CD4-positive, alpha-beta T cell (primary cell): ENCODE measurements at regions of chr22 and their contacts with region 1.

Region 1: DNA sequence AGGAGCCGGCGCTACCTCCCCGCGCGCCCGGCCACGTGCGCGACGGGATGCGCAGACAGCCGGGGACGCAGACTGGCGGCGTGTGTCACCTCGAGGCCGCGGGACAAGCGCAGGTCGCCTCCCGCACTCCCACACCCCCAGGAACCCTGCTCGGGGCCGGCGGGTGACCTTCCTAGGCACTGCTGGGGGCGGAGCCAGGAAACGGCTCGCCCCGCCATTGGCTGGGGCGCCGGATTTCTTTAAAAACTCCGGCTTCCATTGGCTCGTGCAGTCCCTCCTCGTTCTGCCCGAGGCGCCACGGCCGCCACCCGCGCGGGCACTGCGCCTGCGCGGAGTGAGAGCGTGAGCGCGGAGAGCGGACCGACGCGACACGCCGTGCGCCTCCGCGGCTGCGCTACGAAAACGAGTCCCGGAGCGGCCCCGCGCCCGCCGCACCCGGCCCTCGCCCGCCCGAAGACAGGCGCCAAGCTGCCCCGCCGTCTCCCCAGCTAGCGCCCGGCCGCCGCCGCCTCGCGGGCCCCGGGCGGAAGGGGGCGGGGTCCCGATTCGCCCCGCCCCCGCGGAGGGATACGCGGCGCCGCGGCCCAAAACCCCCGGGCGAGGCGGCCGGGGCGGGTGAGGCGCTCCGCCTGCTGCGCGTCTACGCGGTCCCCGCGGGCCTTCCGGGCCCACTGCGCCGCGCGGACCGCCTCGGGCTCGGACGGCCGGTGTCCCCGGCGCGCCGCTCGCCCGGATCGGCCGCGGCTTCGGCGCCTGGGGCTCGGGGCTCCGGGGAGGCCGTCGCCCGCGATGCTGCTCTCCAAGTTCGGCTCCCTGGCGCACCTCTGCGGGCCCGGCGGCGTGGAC is at the start of gene PIM3:
- DNase-seq: peak; percentile 82 to 97 (median 88)
- ATAC-seq: peak; percentile 61
- H3K4me3 ChIP-seq: peak within 1 kb of the TSS; percentile 82
- H3K4me3 Mint-ChIP-seq: peak within 1 kb of the TSS; percentile 96
- H3K27ac ChIP-seq: peak within 1 kb of the TSS; percentile 82 to 91
- H3K27ac Mint-ChIP-seq: peak within 1 kb of the TSS; percentile 97
- H3K4me1 ChIP-seq: peaks cover 41% of the 10 kb centered on the region
- H3K4me1 Mint-ChIP-seq: peaks cover 18% of the 10 kb centered on the region
- H3K27me3 ChIP-seq: no peaks in the 10 kb centered on the region
- H3K27me3 Mint-ChIP-seq: no peaks in the 10 kb centered on the region
- CTCF ChIP-seq: no peak
- total RNA-seq, gene PIM3: 224 to 230 TPM

Region 2: GRCh38 chr22:49903322-49904039 is 56.9 kb before region 1 on chr22:
- CTCF ChIA-PET with region 1: no interaction called
- POLR2A ChIA-PET with region 1: no interaction called
- intact Hi-C with region 1: no loop called
- DNase-seq: peak in 1 of 14 experiments; percentile 15
- ATAC-seq: no peak
- H3K4me3 ChIP-seq: no peak overlapping the region
- H3K4me3 Mint-ChIP-seq: no peak overlapping the region
- H3K27ac ChIP-seq: no peak overlapping the region
- H3K27ac Mint-ChIP-seq: no peak overlapping the region
- H3K4me1 ChIP-seq: peaks cover 2% of the 10 kb centered on the region
- H3K4me1 Mint-ChIP-seq: no peaks in the 10 kb centered on the region
- H3K27me3 ChIP-seq: no peaks in the 10 kb centered on the region
- H3K27me3 Mint-ChIP-seq: no peaks in the 10 kb centered on the region
- CTCF ChIP-seq: no peak

Region 3: DNA sequence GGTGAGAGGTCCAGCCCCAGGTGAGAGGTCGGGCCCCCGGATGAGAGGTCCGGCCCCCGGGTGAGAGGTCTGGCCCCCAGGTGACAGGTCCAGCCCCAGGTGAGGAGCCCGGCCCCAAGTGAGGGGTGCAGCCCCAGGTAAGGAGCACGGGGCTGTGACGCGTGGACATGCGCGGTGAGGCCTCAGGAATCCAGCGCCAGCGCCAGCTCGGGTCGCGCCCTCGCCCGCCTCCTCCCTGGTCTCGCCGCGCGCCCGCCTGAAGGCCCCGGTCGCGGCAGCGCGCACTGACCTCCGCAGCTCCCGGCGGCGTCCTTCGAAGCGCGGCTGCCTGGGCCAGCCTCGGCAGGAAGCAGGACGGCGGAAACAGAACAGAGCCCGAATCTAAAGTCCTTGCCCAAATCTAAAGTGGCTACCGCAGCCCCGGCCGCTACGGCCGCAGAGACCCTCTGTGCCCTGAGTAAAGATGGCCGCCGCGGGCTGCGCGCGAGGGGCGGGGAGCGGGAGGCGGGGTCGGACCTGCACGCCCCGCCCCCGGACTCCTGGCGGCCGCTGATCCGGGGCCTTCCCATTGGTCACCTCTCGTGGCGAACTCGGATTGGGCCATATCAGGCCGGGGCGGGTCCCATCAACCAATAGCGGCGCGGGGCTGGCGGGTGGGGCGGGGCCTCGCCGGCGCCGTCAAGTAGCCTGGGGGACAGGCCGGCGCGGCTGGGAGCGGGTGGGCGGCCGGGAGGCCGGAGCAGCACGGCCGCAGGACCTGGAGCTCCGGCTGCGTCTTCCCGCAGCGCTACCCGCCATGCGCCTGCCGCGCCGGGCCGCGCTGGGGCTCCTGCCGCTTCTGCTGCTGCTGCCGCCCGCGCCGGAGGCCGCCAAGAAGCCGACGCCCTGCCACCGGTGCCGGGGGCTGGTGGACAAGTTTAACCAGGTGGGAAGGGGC is 42.1 kb before region 1 on chr22 and contains the starts of genes ALG12 and CRELD2:
- CTCF ChIA-PET with region 1: no interaction called
- POLR2A ChIA-PET with region 1: interaction called, 3 read pairs
- intact Hi-C with region 1: loop called in 1 of 2 experiments (anchors 1 kb)
- DNase-seq: peak; percentile 93 to 98 (median 96)
- ATAC-seq: peak; percentile 99
- H3K4me3 ChIP-seq: peak within 1 kb of the TSS; percentile 89
- H3K4me3 Mint-ChIP-seq: peak within 1 kb of the TSS; percentile 95
- H3K27ac ChIP-seq: peak within 1 kb of the TSS; percentile 58 to 83
- H3K27ac Mint-ChIP-seq: peak within 1 kb of the TSS; percentile 85
- H3K4me1 ChIP-seq: peaks cover 24% of the 10 kb centered on the region
- H3K4me1 Mint-ChIP-seq: peaks cover 21% of the 10 kb centered on the region
- H3K27me3 ChIP-seq: no peaks in the 10 kb centered on the region
- H3K27me3 Mint-ChIP-seq: no peaks in the 10 kb centered on the region
- CTCF ChIP-seq: no peak
- total RNA-seq, gene ALG12: 13.5 to 14.6 TPM
- total RNA-seq, gene CRELD2: 21.2 to 23.3 TPM

Region 4: GRCh38 chr22:49936018-49936952 is 24.1 kb before region 1 on chr22:
- CTCF ChIA-PET with region 1: interaction called, 11 read pairs
- POLR2A ChIA-PET with region 1: interaction called, 92 read pairs
- intact Hi-C with region 1: loop called (anchors 1 kb)
- DNase-seq: peak; percentile 85 to 97 (median 92)
- ATAC-seq: peak; percentile 74
- H3K4me3 ChIP-seq: peak overlapping the region; percentile 47
- H3K4me3 Mint-ChIP-seq: peak overlapping the region; percentile 76
- H3K27ac ChIP-seq: peak overlapping the region; percentile 86 to 88
- H3K27ac Mint-ChIP-seq: peak overlapping the region; percentile 87
- H3K4me1 ChIP-seq: peaks cover 58% of the 10 kb centered on the region
- H3K4me1 Mint-ChIP-seq: peaks cover 13% of the 10 kb centered on the region
- H3K27me3 ChIP-seq: no peaks in the 10 kb centered on the region
- H3K27me3 Mint-ChIP-seq: no peaks in the 10 kb centered on the region
- CTCF ChIP-seq: no peak

Region 5: DNA sequence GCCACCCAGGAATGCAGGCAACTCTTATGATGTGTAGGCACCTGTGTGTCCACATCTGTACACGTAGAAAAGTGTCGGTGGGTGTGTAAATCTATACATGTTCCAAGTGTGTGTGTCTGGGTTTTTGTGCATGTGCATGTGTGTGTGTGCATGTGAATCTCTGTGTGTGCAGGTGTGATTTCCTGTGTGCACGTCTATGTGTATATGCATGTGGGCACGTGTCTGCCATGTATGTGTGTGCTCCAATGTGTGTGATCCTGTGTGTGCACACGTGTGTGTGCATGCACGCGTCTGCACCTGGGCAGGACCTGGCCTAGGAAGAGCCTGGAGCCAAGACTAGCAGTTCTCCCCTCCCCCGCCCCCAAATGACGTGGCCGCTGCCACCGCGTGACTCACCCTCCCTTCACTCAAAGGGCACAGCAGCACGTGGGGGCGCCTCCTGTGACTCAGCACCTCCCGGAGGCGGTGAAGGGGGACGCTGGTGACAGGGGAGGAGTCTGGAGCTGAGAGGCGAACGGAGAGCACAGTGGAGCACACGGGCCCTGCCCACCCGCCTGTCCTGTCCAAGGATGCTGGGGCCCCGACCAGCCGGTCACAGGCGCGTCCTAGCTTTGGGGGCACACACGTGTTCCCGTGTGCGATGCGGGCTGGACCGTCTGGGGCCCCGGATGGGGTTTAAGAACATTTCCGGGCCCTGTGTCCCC is 10.3 kb after region 1 on chr22:
- CTCF ChIA-PET with region 1: no interaction called
- POLR2A ChIA-PET with region 1: interaction called, 19 read pairs
- intact Hi-C with region 1: no loop called
- DNase-seq: peak; percentile 81 to 98 (median 93)
- ATAC-seq: peak; percentile 86
- H3K4me3 ChIP-seq: peak overlapping the region; percentile 56
- H3K4me3 Mint-ChIP-seq: peak overlapping the region; percentile 87
- H3K27ac ChIP-seq: no peak overlapping the region
- H3K27ac Mint-ChIP-seq: peak overlapping the region; percentile 83
- H3K4me1 ChIP-seq: peaks cover 66% of the 10 kb centered on the region
- H3K4me1 Mint-ChIP-seq: peaks cover 25% of the 10 kb centered on the region
- H3K27me3 ChIP-seq: no peaks in the 10 kb centered on the region
- H3K27me3 Mint-ChIP-seq: no peaks in the 10 kb centered on the region
- CTCF ChIP-seq: no peak

Region 6: GRCh38 chr22:49992921-49993648 is 32.7 kb after region 1 on chr22:
- CTCF ChIA-PET with region 1: interaction called, 3 read pairs
- POLR2A ChIA-PET with region 1: interaction called, 3 read pairs
- intact Hi-C with region 1: loop called in 1 of 2 experiments (anchors 2 kb)
- DNase-seq: peak; percentile 51 to 87 (median 67)
- ATAC-seq: peak; percentile 95
- H3K4me3 ChIP-seq: no peak overlapping the region
- H3K4me3 Mint-ChIP-seq: no peak overlapping the region
- H3K27ac ChIP-seq: no peak overlapping the region
- H3K27ac Mint-ChIP-seq: no peak overlapping the region
- H3K4me1 ChIP-seq: peaks cover 14% of the 10 kb centered on the region
- H3K4me1 Mint-ChIP-seq: peaks cover 6% of the 10 kb centered on the region
- H3K27me3 ChIP-seq: no peaks in the 10 kb centered on the region
- H3K27me3 Mint-ChIP-seq: peaks cover 4% of the 10 kb centered on the region
- CTCF ChIP-seq: peak; percentile 75